HCT116 (cell line): ENCODE measurements at regions of chr7 and their contacts with region 1.

Region 1: DNA sequence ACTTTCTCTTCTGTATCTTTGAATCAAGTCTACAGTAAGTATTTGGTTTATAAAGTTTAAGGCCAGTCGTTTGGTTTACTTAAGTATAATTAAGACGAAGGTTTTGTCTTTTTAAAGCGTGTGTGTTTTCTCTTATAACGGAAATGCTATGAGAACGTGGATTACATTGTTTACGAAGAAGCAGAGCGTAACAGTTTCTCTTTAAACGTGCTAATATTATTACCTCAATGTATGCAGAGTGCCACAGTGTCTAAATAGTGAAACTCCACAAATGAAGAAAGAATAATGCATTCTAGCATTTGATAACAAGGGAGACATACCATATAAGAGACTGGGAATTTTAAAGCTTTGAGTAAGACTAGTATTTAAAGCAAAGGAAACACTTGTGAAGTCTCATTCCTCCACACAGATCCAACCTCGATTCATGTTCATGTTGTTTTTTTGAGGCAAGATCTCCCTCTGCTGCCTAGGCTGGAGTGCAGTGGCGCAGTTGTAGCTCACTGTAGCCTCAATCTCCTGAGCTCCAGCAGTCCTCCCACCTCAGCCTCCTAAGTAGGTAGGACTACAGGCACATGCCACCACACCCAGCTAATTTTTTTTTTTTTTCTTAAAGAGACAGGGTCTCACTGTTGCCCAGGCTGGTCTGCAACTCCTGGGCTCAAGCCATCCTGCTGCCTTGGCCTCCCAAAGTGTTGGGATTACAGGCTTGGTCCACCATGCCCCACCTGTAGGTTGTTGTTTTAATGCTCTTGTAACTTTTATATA is 75.1 kb downstream of the ANKRD61 start:
- DNase-seq: peak; percentile 71
- ATAC-seq: peak; percentile 33
- H3K4me3 ChIP-seq: peak overlapping the region; percentile 76 to 80
- H3K27ac ChIP-seq: peak overlapping the region; percentile 16; the same call in 1 of the 2 replicates
- H3K4me1 ChIP-seq: peaks cover 10 to 24% of the 10 kb centered on the region in 2 experiments; a peak in 3 of 4 replicates
- H3K27me3 ChIP-seq: no peaks in the 10 kb centered on the region
- CTCF ChIP-seq: peak; percentile 44 to 53 (median 51); a peak in 5 of 6 replicates
- POLR2A ChIP-seq: no peak
- RAD21 ChIP-seq: peak; percentile 78

Region 2: DNA sequence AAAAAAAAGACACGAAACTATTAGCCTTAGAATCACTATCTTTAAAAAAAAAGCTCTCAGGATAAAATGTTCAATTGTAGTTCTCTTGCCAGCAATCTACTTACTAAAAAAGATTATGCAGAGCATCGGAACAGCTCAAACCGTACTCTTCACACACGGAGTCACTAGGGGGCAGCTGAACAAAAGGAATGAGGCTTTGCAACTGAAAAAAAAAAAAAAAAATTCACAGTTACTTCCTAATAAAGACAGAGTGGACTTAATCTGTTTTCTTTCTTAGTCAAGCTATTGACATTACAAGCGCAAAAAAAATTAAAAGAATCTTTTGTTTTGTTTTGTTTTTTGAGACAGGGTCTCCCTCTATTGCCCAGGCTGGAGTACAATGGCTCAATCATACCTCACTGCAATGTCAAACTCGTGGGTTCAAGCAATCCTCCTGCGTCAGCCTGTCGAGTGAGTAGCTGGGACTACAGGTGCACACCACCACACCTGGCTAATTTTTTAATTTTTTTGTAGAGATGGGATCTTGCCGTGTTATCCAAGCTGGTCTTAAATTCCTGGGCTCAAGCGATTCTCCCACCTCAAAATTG is 109.0 kb before region 1 on chr7:
- CTCF ChIA-PET with region 1: interaction called, 8 read pairs
- POLR2A ChIA-PET with region 1: no interaction called
- RAD21 ChIA-PET with region 1: interaction called, 3 to 4 read pairs
- intact Hi-C with region 1: loop called (anchors 1 kb)
- DNase-seq: no peak
- ATAC-seq: peak; percentile 82
- H3K4me3 ChIP-seq: no peak overlapping the region
- H3K27ac ChIP-seq: no peak overlapping the region
- H3K4me1 ChIP-seq: peaks cover 0 to 8% of the 10 kb centered on the region in 2 experiments; a peak in 1 of 4 replicates
- H3K27me3 ChIP-seq: no peaks in the 10 kb centered on the region
- CTCF ChIP-seq: peak; percentile 53 to 76 (median 67)
- POLR2A ChIP-seq: no peak
- RAD21 ChIP-seq: peak; percentile 89